Activated CD4-positive, alpha-beta memory T cell treated with anti-CD3 and anti-CD28 coated beads for 36 hours (primary cell): ENCODE measurements at regions of chr21 and their contacts with region 1.

Region 1: GRCh38 chr21:43854773-43855633 is 10.0 kb upstream of the AGPAT3 start:
- DNase-seq: peak; percentile 79
- H3K4me3 Mint-ChIP-seq: no peak overlapping the region
- H3K27ac Mint-ChIP-seq: no peak overlapping the region
- H3K4me1 Mint-ChIP-seq: peaks cover 17% of the 10 kb centered on the region
- H3K27me3 Mint-ChIP-seq: peaks cover 14% of the 10 kb centered on the region

Region 2: GRCh38 chr21:43893536-43894205 is 38.7 kb after region 1 on chr21:
- CTCF ChIA-PET with region 1: no interaction called
- POLR2A ChIA-PET with region 1: interaction called, 3 read pairs
- intact Hi-C with region 1: loop called (anchors 5 kb)
- DNase-seq: peak; percentile 73
- H3K4me3 Mint-ChIP-seq: peak overlapping the region; percentile 42
- H3K27ac Mint-ChIP-seq: peak overlapping the region; percentile 71
- H3K4me1 Mint-ChIP-seq: peaks cover 50% of the 10 kb centered on the region
- H3K27me3 Mint-ChIP-seq: no peaks in the 10 kb centered on the region